Uterus (tissue), 4 donors: ENCODE measurements at regions of chr1 and their contacts with region 1.

Region 1: GRCh38 chr1:55284852-55285251 is 69.7 kb upstream of the USP24 start:
- DNase-seq: peak; percentile 35 to 54
- H3K4me3 ChIP-seq: no peak overlapping the region
- H3K27ac ChIP-seq: no peak overlapping the region
- H3K4me1 ChIP-seq: no peaks in the 10 kb centered on the region
- H3K27me3 ChIP-seq: no peaks in the 10 kb centered on the region
- CTCF ChIP-seq: peak; percentile 54 to 73 (median 66)
- POLR2A ChIP-seq: no peak

Region 2: DNA sequence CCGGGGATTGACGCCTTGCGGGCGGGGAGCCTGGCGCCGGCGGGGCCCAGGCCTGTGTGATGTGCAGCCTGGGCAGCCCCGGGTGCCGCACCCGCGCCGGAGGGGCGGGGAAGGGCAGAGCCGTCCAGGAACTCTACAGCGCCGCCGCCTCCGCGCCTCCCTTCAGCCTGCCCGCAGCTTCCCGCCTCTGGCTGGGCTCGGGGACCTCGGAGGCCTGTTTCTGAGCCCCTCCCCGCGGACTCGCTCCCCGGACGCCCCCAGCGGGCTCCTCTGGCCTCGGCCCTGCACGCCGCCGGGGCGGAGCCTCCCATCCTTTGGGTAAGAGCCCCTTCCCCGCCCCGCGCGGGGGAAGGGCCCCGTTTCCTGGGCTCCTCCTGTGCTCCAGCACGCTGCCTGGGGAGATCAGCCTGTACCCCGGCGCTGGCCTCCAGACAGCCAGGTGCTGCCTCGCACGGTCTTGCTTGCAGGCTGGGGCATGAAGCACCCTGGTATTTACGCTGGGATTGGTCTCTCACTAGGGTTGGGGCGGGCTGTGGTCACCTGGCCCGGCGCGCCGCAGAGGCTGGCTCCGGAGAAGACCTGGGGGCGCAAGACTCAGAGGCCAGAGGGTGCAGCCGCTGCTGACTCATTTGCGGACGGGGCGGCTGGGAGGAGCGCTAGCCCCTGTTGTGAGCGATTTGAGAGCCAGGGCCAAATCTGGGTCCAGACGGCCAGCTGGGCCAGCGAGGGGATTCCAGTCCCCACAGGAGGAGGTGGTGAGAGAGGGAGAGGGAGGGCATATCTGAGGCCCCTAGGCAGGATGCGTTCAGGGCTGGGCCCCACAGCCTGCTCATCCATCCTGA is 742.5 kb before region 1 on chr1:
- intact Hi-C with region 1: no loop called
- DNase-seq: peak; percentile 59 to 74
- H3K4me3 ChIP-seq: peak overlapping the region; percentile 34 to 48
- H3K27ac ChIP-seq: peak overlapping the region; percentile 81 to 89
- H3K4me1 ChIP-seq: peaks cover 0 to 13% of the 10 kb centered on the region in 2 donors
- H3K27me3 ChIP-seq: no peaks in the 10 kb centered on the region
- CTCF ChIP-seq: peak in 2 of 4 experiments; percentile 15 to 23
- POLR2A ChIP-seq: peak in 1 of 2 donors; percentile 5

Region 3: DNA sequence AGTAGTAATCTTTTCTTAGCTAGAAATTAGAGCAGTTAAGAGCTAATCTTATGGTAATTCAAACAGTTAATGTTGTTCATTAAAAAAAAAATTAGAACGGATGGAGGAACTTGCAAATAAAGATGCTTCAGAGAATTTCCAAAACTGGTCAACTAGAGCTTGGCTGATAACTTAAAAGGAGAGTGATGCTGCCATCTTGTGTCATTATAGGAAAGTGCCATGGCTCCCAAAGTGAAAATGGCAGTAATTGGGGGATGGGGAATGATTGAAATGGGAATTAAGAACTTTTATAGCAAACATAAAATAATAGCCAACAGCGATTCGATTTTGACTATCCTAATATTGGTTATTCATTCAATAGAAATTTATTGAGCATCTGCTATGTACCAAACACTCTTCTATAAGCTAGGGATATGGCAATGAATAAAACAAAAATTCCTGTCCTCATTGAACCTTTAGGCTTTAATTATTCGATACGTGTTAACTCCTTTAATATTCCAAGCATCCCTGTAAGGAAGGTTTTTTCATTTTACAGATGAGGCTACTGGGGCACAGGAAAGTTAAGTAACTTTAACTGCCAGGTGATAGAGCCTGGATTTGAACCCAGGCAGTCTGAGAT is 1300.2 kb after region 1 on chr1:
- intact Hi-C with region 1: loop called (anchors 5 kb)
- DNase-seq: peak in 1 of 2 donors; percentile 38
- H3K4me3 ChIP-seq: no peak overlapping the region
- H3K27ac ChIP-seq: no peak overlapping the region
- H3K4me1 ChIP-seq: no peaks in the 10 kb centered on the region
- H3K27me3 ChIP-seq: no peaks in the 10 kb centered on the region
- CTCF ChIP-seq: peak; percentile 81 to 92 (median 90)
- POLR2A ChIP-seq: no peak